Panc1 (cell line): ENCODE measurements at regions of chr2 and their contacts with region 1.

Region 1: DNA sequence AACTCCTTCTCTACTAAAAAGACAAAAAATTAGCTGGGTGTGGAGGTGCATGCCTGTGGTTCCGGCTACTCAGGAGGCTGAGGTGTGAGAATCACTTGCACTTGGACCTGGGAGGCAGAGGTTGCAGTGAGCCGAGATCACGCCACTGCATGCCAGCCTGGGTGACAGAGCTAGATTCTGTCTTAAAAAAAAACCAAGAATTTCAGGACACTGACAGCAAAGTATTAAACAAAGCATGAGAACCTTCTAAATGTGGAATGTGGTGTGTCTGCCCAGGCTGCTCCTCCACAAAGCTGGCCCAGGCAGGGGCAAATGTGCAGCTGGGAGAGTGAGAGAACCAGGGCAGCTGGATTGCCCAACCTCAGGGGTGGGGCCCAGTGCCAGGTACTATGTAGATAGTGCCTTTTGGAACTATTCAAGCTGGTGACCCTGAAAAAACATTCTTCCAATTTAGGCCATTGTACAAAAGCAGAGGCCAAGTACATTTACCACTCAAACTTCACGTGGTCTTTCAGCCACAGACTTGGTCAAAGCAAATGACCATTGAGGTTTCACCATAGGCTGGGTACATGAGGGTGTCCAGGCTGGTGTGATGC is 6.7 kb upstream of the UGT1A5 start:
- DNase-seq: no peak
- ATAC-seq: no peak
- H3K4me3 ChIP-seq: no peak overlapping the region
- H3K27ac ChIP-seq: no peak overlapping the region; the same call in 1 of the 2 replicates
- H3K4me1 ChIP-seq: peaks cover 5% of the 10 kb centered on the region
- H3K27me3 ChIP-seq: no peaks in the 10 kb centered on the region
- CTCF ChIP-seq: no peak

Region 2: DNA sequence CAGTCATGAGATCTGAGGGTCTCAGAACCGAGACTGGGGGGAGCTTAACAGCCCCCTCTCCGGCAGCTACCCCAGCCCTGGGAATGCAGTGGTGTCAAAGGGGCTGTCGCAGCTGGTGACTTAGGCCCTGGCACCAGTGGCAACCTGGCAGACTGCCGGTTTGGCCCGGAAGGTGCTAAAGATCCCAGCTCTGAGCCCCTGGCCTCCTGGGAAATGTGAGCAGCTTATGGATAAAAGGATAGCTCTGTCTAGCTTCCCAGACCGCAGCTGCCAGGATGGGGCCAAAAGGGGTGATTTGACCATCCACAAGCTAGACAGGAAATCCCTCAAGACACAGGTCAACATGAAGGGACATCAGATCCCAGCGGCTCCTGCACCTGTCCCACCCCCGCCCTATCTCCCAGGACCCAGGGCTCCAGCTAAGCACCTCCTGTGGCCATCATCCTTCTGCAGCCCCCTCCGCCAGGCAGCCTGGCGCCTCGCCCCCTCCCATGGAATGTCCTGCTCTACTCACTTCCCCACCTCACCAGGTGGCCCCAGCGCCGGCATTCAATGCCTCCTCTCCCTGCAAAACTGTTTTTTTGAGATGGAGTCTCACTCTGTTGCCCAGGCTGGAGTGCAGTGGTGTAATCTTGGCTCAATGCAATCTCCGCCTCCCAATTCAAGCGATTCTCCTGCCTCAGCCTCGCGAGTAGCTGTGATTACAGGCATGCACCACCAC is 1105.8 kb before region 1 on chr2:
- CTCF ChIA-PET with region 1: no interaction called
- POLR2A ChIA-PET with region 1: no interaction called
- in situ Hi-C with region 1: no loop called
- intact Hi-C with region 1: no loop called
- DNase-seq: no peak
- ATAC-seq: no peak
- H3K4me3 ChIP-seq: no peak overlapping the region
- H3K27ac ChIP-seq: no peak overlapping the region
- H3K4me1 ChIP-seq: no peaks in the 10 kb centered on the region
- H3K27me3 ChIP-seq: no peaks in the 10 kb centered on the region
- CTCF ChIP-seq: no peak

Region 3: GRCh38 chr2:233486778-233487552 is 219.0 kb before region 1 on chr2:
- CTCF ChIA-PET with region 1: no interaction called
- POLR2A ChIA-PET with region 1: no interaction called
- in situ Hi-C with region 1: no loop called
- intact Hi-C with region 1: loop called (anchors 5 kb)
- DNase-seq: peak; percentile 5
- ATAC-seq: peak; percentile 83
- H3K4me3 ChIP-seq: no peak overlapping the region
- H3K27ac ChIP-seq: peak overlapping the region; percentile 81
- H3K4me1 ChIP-seq: peaks cover 21% of the 10 kb centered on the region
- H3K27me3 ChIP-seq: no peaks in the 10 kb centered on the region
- CTCF ChIP-seq: no peak